ENCODE measurements at regions of chr2 and their contacts with region 1.

Region 1: DNA sequence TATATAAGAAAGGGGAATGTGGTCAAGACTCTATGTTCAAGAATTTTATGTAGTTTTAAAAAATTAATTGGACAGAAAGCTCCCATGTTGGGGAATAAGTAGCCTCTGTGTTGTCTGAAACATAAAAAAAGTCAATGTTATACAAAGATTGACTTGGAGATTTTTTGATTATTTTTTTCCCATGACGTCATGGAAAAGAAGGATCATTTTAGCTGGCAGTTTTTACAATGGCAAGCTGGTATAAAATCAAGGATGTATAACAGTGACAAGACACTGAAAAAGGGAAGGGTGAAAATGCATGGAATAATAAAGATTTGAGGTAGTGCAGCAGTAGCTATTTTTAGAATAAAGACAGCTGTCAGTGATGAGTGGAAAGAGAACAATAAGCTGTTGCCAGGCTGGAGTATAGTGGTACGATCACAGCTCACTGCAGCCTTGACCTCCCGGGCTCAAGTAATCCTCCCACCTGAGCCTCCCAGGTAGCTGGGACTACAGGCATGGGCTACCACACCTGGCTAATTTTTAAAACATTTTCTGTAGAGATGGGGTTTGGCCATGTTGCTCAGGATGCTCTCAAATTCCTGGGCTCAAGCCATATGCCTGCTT is 9.2 kb downstream of the SLC39A10 start:
- DNase-seq: no peak
- ATAC-seq: peak in 1 of 2 donors; percentile 23

Region 2: GRCh38 chr2:195737173-195738043 is 71.2 kb after region 1 on chr2:
- intact Hi-C with region 1: no loop called
- DNase-seq: no peak
- ATAC-seq: no peak

Region 3: GRCh38 chr2:196068271-196069209 is 402.3 kb after region 1 on chr2 and contains the start of gene DNAH7:
- intact Hi-C with region 1: loop called in 1 of 2 experiments (anchors 5 kb)
- DNase-seq: peak; percentile 92
- ATAC-seq: peak; percentile 96 to 99
- total RNA-seq, gene DNAH7: 0.44 to 0.50 TPM

Measured in left cardiac atrium (tissue), 4 donors.